Posterior vena cava (tissue), 2 donors: ENCODE measurements at regions of chr2 and their contacts with region 1.

Region 1: DNA sequence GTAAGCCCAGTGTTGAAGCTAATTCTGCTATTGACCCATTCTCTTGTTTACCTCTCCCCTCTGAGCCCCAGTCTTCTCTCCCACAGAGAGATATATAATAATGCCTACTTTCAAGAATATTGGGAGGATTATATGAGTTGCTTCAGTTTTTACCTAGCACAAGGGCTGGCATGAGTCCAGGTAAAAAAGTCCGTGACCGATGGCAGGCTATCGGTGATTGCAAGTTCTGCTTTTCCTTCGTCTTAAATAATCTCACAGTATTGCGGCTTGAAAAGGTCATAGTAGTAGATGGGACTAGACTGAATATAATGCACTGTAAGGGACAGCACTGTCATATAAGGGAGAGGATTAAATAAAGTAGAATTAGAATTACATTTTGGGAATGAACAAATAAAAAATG is 77.6 kb downstream of the KIF5C start:
- DNase-seq: no peak

Region 2: GRCh38 chr2:147577323-147577997 is 1375.2 kb before region 1 on chr2:
- intact Hi-C with region 1: loop called in 1 of 2 experiments (anchors 5 kb)
- DNase-seq: no peak

Region 3: GRCh38 chr2:148675708-148676107 is 276.9 kb before region 1 on chr2:
- intact Hi-C with region 1: no loop called
- DNase-seq: no peak